ENCODE measurements at regions of chr14 and their contacts with region 1.

Region 1: GRCh38 chr14:68506021-68506644 is 286.7 kb downstream of the ZFP36L1 start:
- DNase-seq: no peak
- ATAC-seq: no peak
- H3K4me3 Mint-ChIP-seq: peak overlapping the region; percentile 58 to 85 (median 78)
- H3K27ac Mint-ChIP-seq: peak overlapping the region; percentile 76 to 96 (median 93)
- H3K4me1 Mint-ChIP-seq: peaks cover 43 to 85% (median 79%) of the 10 kb centered on the region in 4 donors
- H3K27me3 Mint-ChIP-seq: no peaks in the 10 kb centered on the region

Region 2: GRCh38 chr14:68268197-68268596 is 237.9 kb before region 1 on chr14:
- POLR2A ChIA-PET with region 1: no interaction called
- DNase-seq: peak in 1 of 10 donors; percentile 45
- ATAC-seq: peak; percentile 55 to 67
- H3K4me3 Mint-ChIP-seq: peak overlapping the region in 8 of 10 donors; percentile 6 to 69 (median 40)
- H3K27ac Mint-ChIP-seq: peak overlapping the region; percentile 67 to 91 (median 80)
- H3K4me1 Mint-ChIP-seq: peaks cover 30 to 81% (median 46%) of the 10 kb centered on the region in 4 donors
- H3K27me3 Mint-ChIP-seq: no peaks in the 10 kb centered on the region

Region 3: DNA sequence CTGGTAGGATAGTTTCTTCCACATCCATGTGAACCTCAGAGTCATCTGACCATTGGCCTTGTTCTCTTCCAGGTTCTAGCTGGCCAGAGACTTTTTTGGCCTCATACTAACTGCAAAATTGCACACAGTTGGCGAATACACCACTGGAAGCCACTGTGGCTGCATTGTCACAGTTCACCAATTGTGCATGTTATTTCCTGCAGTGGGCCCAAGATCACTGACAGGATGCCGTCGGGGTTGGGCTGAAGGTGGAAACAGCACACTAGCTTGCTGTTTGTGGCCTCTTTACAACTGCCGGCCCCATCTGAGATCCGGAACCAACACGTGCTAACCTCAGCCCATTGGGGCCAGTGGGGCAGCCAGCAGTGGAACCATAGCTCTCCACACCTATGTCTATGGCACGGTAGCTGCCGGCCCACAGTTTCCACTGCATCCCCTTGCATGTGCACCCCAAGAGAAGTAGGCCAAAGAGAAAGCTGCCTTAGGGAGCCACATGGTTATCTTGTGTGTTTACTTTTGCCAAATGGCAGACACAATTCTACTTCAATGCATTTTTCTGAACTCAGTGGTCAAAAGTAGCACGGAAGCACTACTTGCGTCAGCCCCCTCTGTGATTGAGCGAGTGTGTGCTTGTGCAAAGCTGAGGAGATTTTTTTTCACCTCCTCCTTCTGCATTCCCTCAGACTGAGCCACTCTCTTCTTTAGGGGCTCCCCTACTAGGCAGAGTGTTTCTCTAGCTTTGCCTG is 222.6 kb before region 1 on chr14:
- POLR2A ChIA-PET with region 1: interaction called, 26 read pairs
- DNase-seq: peak; percentile 22 to 78 (median 60)
- ATAC-seq: peak; percentile 66 to 73
- H3K4me3 Mint-ChIP-seq: peak overlapping the region; percentile 49 to 82 (median 68)
- H3K27ac Mint-ChIP-seq: peak overlapping the region; percentile 94 to 99 (median 98)
- H3K4me1 Mint-ChIP-seq: peaks cover 40 to 97% (median 86%) of the 10 kb centered on the region in 4 donors
- H3K27me3 Mint-ChIP-seq: no peaks in the 10 kb centered on the region

Region 4: DNA sequence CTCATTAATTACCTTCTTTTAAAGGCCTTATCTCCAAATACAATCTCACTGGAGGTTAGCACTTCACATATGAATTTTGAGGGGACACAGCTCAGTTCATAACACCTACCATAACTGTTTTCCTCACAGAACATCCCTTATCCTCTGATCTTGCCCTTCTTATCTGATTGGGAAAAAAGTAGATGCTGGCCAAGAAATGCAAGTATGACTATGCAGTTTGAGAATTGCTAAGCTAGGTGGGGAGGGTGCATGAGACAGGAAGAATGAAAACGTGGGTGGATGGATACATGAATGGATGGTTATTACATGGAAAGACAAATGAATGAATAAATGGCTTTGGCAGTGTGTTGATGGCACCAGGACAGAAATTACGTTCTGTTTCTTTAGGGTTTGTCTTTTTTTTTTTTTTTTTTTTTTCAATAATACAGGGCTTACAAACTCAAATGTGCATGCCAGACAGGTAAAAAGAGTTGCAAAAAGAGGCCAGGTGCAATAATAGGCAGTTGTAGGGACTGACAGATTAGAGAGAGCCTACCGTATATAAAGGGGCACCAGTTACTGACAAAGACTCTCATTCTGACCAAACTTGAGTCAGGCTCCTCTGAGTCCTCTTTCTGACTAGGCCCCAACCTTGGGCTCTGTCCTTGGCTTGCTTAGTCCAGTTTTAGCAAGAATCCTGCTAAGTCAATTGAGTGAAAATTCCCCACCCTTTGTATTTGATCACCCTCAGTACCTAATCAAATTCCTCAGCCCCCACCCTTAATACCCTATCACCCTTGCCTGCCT is 18.1 kb before region 1 on chr14:
- POLR2A ChIA-PET with region 1: interaction called, 77 read pairs
- DNase-seq: no peak
- ATAC-seq: no peak
- H3K4me3 Mint-ChIP-seq: no peak overlapping the region
- H3K27ac Mint-ChIP-seq: peak overlapping the region in 6 of 10 donors; percentile 0 to 54 (median 25)
- H3K4me1 Mint-ChIP-seq: peaks cover 33 to 67% (median 56%) of the 10 kb centered on the region in 4 donors
- H3K27me3 Mint-ChIP-seq: no peaks in the 10 kb centered on the region

Region 5: DNA sequence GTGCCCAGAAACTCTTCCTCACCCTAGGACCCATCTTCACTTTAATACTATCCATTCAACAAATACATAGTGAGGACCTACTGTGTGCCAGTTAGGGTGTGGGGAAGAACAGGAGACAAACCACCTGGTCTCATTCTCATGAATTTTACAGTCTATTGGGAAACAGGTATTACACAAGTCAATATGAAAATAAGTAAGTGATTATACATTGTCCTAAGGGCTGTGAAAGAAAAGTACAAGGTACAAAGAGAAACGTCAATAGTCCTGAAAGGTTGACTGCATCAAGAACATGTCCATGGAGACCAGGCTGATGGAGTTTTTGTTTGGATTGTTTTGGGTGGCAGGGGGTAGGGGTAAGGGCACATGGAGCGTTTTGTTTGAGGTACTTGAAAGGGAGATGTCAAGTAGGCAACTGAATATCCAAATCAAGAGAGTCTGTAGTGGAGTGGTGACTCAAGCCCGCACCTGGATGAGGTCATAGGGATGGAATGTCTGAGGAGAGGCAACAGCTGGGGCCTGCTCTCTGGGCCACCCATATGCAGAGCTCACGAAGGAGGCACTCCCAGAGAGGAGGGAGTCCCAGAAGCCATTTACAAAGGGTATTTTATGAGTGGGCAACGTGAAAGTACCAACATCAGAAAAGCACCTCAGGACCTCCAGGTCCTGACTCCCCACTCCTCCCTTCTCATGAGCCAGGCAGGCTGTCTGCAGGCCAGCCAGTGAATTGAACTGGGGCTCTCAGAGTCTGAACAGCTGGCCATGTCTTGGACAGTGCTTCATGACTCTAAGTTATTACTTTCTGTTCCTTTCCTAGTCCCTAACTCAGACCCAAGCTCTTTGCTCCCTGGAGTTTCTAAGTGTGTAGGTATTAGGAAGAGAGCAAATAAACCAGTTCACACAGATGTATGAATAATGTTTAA is 14.8 kb after region 1 on chr14:
- POLR2A ChIA-PET with region 1: interaction called, 53 read pairs
- DNase-seq: no peak
- ATAC-seq: no peak
- H3K4me3 Mint-ChIP-seq: no peak overlapping the region
- H3K27ac Mint-ChIP-seq: peak overlapping the region in 3 of 10 donors; percentile 41 to 72 (median 43)
- H3K4me1 Mint-ChIP-seq: peaks cover 14 to 45% (median 37%) of the 10 kb centered on the region in 4 donors
- H3K27me3 Mint-ChIP-seq: no peaks in the 10 kb centered on the region

Region 6: DNA sequence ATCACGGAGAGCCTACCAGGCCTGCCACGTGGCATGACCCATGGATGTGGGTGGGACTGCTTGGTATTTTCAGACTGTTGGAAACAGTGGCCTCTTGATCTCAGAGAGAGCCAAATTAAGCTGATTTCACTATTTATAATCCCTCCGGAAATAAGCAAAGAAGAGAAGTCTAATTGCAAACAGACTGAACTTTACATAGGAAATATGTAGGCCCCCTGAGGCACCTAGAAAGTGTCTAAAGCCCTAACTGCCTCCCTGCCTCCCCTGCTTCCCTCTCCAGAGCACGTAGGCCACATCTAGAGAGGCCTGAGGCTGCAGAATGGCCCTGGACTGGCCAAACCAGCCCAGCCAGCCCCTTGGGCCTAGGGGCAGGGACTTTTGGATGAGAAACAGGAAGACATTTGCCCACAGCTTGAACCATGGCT is 163.0 kb after region 1 on chr14:
- POLR2A ChIA-PET with region 1: no interaction called
- DNase-seq: no peak
- ATAC-seq: no peak
- H3K4me3 Mint-ChIP-seq: no peak overlapping the region
- H3K27ac Mint-ChIP-seq: no peak overlapping the region
- H3K4me1 Mint-ChIP-seq: peaks cover 16 to 20% (median 19%) of the 10 kb centered on the region in 4 donors
- H3K27me3 Mint-ChIP-seq: no peaks in the 10 kb centered on the region

Region 7: DNA sequence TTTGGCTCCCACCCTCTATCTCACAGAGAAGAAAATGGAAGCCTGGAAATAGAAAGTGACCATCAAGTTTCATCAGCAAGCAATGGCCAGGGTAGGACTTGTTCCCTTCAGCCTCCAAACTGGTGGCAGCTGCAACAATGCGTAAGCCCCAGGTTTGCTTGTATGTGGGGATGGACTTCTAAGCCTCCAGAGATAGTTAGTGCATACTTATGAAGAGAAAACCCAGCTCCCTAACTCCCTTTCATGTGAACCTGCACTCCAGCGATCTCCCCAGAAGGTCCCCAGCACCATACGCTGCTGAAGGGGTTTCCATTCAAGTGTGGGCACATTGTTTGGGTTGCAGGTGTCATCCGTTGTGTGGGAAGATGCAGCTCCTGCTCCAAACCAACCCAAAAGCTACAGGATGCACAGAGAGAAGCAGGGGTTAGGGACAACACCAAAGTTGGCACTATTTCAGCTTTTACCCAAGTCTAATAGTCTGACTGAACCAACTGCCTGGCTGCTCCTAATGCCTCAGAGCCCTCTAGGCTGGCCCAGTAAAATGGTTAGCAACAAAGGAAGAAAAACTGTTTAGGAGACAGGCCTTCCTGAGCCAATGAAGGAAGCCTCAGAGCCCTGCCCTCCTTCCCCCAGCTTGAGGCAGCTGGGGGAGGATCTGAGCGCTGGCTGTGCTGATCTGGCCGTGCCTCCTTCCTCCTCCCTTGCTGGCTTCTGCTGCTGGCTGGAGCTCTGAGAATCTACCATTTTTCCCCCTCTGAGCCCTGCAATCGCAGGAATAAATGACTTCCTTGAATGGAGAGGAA is 274.4 kb after region 1 on chr14:
- POLR2A ChIA-PET with region 1: interaction called, 72 read pairs
- DNase-seq: peak in 4 of 10 donors; percentile 31 to 47 (median 34)
- ATAC-seq: peak; percentile 16 to 17
- H3K4me3 Mint-ChIP-seq: peak overlapping the region; percentile 75 to 89 (median 84)
- H3K27ac Mint-ChIP-seq: peak overlapping the region; percentile 85 to 99 (median 93)
- H3K4me1 Mint-ChIP-seq: peaks cover 39 to 87% (median 80%) of the 10 kb centered on the region in 4 donors
- H3K27me3 Mint-ChIP-seq: no peaks in the 10 kb centered on the region

Measured in naive thymus-derived CD8-positive, alpha-beta T cell (primary cell).